ENCODE measurements at regions of chr9 and their contacts with region 1.

Region 1: DNA sequence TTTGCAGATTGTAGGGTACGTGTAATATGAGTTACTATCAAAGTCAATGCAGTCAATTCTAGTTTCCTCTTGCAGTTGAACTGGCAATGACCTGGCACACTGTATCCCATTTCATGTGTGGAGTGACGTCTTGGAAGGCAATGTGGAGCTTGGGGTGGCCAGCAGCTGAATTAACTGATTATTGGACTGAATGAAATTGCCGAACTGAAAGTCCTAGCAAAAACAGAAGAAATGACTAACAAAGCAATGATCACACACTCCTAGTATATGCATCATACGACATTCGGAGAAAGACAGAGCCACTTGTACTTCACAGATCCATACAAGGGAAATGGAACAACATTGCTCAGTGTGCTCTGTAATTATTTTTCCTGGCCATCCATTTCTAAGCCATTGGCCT is 259.1 kb upstream of the DAPK1 start:
- DNase-seq: no peak
- H3K4me3 Mint-ChIP-seq: no peak overlapping the region
- H3K27ac Mint-ChIP-seq: no peak overlapping the region
- H3K4me1 Mint-ChIP-seq: no peaks in the 10 kb centered on the region
- H3K27me3 Mint-ChIP-seq: no peaks in the 10 kb centered on the region

Region 2: GRCh38 chr9:86860006-86860405 is 378.5 kb before region 1 on chr9:
- intact Hi-C with region 1: loop called (anchors 5 kb)
- DNase-seq: no peak
- H3K4me3 Mint-ChIP-seq: no peak overlapping the region
- H3K27ac Mint-ChIP-seq: no peak overlapping the region
- H3K4me1 Mint-ChIP-seq: no peaks in the 10 kb centered on the region
- H3K27me3 Mint-ChIP-seq: no peaks in the 10 kb centered on the region

Region 3: DNA sequence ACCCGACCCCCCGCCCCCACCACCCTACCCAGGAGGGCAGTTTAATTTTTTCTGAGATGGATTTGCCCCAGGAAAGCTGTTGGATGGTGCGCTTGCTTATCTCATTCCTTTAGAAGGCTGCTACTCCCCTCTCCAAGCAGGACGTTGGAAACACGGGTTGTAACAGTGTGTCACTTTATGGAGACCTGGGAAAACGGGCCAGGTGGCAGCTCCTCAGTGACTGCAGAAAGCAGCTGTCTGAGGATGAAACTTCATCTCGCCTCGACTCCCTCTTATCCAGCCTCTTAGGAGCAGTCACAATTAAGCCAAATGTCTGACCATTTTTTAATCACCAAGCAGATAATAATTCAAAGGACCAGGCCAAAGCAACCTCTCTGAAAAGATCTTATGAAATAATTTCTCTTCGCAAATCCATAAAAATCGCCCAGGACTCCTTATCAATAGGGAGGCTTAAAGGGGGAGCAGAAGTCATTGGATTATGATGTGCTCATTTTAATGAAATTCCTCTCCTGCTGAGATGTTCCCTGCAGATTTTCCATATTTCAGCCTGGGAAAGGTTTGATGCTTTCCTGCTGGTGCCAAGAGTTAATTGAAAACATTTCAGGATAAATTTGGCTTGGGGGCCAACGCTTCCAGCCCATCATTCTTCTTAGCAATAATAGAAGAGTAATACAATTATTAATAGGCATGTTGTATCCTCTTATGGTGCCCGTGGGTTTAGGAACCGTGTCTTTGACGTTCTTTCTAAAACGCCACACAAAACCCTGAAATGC is 317.2 kb before region 1 on chr9:
- intact Hi-C with region 1: no loop called
- DNase-seq: no peak
- H3K4me3 Mint-ChIP-seq: no peak overlapping the region
- H3K27ac Mint-ChIP-seq: no peak overlapping the region
- H3K4me1 Mint-ChIP-seq: no peaks in the 10 kb centered on the region
- H3K27me3 Mint-ChIP-seq: peaks cover 5% of the 10 kb centered on the region

Measured in activated CD4-positive, alpha-beta T cell treated with anti-CD3 and anti-CD28 coated beads, Interleukin-2, amount 10 ng/mL, durations not matched to agents 24 days and 14 days (primary cell).